ENCODE measurements at regions of chr17 and their contacts with region 1.

Region 1: DNA sequence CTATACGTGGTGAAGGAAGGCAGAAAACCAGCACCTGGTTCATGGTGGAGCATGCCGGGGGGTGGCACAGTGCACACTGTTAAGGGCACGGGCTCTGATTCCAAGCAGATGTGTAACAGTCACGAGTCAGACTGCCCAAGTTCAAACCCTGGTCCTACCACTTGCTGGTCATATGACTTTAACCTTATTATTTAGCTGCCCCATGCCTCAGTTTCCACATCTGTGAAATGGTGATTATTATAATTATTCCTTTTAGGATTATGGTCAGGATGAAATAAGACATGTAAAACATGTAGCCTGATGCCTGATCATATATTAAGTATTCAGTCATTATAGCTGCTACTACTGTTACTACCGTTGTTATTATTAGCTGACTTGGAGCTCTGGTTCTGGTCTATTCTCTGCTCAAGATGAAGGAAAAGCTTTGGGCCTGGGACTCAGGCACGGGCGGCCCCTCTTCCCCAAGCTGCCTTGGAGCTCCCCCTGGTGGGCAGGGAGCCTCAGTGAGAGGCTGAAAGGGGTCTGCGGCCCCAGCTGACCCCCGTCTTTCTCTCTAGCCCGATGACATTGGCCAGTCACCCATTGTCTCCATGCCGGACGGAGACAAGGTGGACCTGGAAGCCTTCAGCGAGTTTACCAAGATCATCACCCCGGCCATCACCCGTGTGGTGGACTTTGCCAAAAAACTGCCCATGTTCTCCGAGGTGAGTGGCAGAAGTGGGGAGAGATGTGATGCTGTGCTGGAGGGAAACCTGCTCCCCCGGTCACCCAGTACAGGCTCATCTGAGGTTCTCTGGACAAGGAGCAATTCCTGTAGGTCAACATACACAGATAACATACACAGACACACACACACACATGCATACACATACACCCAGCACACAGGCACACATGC is 14.0 kb downstream of the NR1D1 start:
- DNase-seq: peak in 6 of 9 donors; percentile 56 to 69 (median 61)
- ATAC-seq: peak; percentile 76
- H3K4me3 ChIP-seq: no peak overlapping the region
- H3K4me3 Mint-ChIP-seq: peak overlapping the region in 1 of 10 donors; percentile 38
- H3K27ac ChIP-seq: no peak overlapping the region
- H3K27ac Mint-ChIP-seq: peak overlapping the region in 8 of 9 donors; percentile 9 to 70 (median 47)
- H3K4me1 ChIP-seq: peaks cover 0 to 4% of the 10 kb centered on the region in 2 donors
- H3K4me1 Mint-ChIP-seq: peaks cover 4 to 35% (median 21%) of the 10 kb centered on the region in 7 donors
- H3K27me3 ChIP-seq: no peaks in the 10 kb centered on the region
- H3K27me3 Mint-ChIP-seq: no peaks in the 10 kb centered on the region

Region 2: GRCh38 chr17:40075201-40075941 is 11.0 kb before region 1 on chr17:
- CTCF ChIA-PET with region 1: interaction called, 35 read pairs
- POLR2A ChIA-PET with region 1: interaction called, 9 read pairs
- intact Hi-C with region 1: loop called in 1 of 2 experiments (anchors 1 kb)
- DNase-seq: peak; percentile 45 to 80 (median 63)
- ATAC-seq: peak; percentile 93
- H3K4me3 ChIP-seq: no peak overlapping the region
- H3K4me3 Mint-ChIP-seq: peak overlapping the region in 8 of 10 donors; percentile 35 to 78 (median 71)
- H3K27ac ChIP-seq: peak overlapping the region; percentile 18
- H3K27ac Mint-ChIP-seq: peak overlapping the region in 8 of 9 donors; percentile 42 to 89 (median 68)
- H3K4me1 ChIP-seq: peaks cover 13 to 36% of the 10 kb centered on the region in 2 donors
- H3K4me1 Mint-ChIP-seq: peaks cover 7 to 67% (median 36%) of the 10 kb centered on the region in 7 donors
- H3K27me3 ChIP-seq: no peaks in the 10 kb centered on the region
- H3K27me3 Mint-ChIP-seq: no peaks in the 10 kb centered on the region

Region 3: DNA sequence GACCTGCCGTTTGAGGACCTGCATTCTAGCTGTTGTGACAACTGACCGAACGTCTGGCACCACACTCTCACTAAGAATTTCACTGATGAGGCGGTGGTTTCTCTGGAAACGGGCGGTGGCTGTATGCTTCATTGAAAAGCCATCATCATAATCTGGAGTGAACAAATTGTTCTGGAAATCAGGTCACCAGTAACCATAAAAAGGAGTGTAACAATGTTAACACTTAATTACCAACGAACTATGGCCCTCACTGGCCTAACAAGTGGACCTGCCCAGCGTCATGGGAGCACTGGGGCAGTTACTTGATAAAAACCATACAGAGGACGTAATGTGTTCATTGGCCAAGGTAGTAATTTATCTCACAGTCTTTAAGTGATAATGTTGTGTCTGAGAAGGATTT is 545.8 kb after region 1 on chr17:
- CTCF ChIA-PET with region 1: no interaction called
- POLR2A ChIA-PET with region 1: no interaction called
- intact Hi-C with region 1: no loop called
- DNase-seq: no peak
- ATAC-seq: no peak
- H3K4me3 ChIP-seq: no peak overlapping the region
- H3K4me3 Mint-ChIP-seq: no peak overlapping the region
- H3K27ac ChIP-seq: no peak overlapping the region
- H3K27ac Mint-ChIP-seq: peak overlapping the region in 1 of 9 donors; percentile 55
- H3K4me1 ChIP-seq: no peaks in the 10 kb centered on the region
- H3K4me1 Mint-ChIP-seq: peaks cover 0 to 9% (median under 1%) of the 10 kb centered on the region in 7 donors
- H3K27me3 ChIP-seq: no peaks in the 10 kb centered on the region
- H3K27me3 Mint-ChIP-seq: no peaks in the 10 kb centered on the region